Left cardiac atrium (tissue), 4 donors: ENCODE measurements at regions of chr9 and their contacts with region 1.

Region 1: GRCh38 chr9:74773886-74774479 is 113.7 kb downstream of the TRPM6 start:
- DNase-seq: peak; percentile 79
- ATAC-seq: peak; percentile 65 to 72

Region 2: GRCh38 chr9:74255489-74255984 is 518.4 kb before region 1 on chr9:
- intact Hi-C with region 1: no loop called
- DNase-seq: no peak
- ATAC-seq: no peak

Region 3: DNA sequence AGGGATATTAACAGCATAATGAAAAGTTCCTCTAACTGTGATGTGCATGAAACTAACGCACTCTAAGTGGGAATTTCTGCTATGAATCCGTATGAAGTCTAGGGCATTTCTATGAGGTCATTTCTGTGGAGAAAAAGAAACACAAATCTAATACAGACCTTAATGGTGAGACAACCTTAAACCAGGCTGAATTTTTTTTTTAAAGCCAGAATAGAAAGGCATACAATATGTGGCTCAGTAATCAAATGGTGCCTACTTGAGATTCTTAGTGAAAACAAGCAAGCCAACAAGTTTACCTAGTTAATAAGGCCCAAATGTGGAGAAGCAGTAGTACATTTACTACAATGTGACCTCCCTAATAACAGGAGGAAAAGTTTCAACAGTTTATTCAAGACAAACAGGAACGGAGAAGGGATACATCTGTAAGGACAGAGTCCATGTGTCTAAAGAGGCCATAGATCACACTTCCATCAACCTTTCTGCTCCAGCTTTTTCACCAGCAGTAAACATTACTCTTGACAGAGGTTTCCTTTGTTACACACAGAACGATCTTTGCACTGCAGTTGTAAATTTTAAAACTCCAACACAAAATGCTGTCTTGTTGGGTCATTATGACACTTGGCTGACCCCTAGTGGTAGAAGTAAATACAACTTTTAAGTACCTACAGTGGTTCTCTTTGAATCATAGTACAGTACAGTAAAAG is 227.9 kb after region 1 on chr9:
- intact Hi-C with region 1: loop called (anchors 1 to 2 kb)
- DNase-seq: no peak
- ATAC-seq: peak; percentile 78 to 86

Region 4: DNA sequence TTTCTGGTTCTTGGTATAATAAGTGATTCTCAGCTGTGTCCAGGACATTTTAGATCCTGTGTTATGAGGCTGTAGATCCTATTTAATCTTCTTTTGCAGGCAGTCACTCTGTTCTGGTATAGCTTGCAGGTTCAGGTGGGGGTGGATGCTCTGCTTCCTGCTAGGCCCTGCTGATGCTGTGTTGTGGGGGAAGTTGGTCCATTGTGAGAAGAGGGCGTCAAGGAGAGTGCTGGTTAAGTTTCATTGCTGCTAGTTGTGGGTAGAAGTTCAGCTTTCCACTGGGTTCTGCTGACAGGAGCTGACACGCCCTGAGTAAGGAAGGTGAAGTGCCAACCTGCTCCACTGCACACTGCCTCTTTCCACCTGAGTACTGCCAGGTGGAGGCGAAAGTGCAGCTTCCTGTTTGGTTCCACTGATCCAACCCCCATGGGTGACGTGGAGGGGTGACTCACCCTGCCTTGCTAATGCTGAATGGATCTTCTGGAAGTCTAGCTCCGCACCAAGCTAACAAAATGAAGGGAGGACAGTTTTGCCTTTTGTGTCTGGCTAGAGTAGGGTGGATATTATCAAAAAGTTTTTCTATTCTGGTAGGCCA is 297.6 kb after region 1 on chr9:
- intact Hi-C with region 1: loop called (anchors 5 to 10 kb)
- DNase-seq: no peak
- ATAC-seq: no peak

Region 5: DNA sequence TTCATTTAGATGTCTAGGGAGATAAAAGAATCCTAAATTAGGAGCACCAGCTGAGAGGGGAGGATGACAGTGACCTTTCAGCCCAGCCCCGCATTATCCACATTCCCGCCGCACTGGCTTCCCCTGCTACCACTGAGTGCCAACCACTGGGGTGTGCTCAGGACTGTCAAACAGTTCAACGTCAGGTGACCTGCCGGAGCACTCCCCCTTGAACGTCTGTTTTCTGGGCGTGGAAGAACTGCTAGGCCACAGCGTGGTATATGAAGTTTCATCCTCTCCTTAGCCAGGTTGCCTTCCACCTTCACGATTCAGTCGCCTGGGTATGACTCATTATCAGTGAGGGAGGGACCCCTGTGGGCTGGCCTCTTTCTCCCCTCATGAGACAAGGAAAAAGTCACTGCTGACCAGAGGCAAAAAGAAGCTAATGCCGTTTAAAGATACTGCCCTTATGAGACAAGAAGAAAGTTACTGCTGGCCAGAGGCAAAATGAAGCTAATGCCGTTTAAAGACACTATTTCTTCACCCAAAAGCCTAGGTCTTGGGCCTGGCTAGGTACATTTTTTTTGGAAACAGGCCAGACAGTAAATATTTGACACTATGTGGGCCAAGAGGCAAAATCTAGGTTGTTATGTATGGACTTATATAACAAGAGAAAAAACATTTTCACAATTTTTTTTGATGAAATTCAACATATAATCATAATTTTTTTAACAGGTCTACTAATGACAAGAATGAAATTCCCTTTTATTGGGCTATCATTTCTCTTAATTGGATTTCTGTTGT is 309.4 kb after region 1 on chr9:
- intact Hi-C with region 1: loop called (anchors 5 to 10 kb)
- DNase-seq: peak; percentile 42
- ATAC-seq: peak; percentile 7 to 12